IMR-90 (cell line): ENCODE measurements at regions of chr1 and their contacts with region 1.

Region 1: GRCh38 chr1:29889776-29890175 is 653.5 kb downstream of the PTPRU start:
- DNase-seq: no peak
- ATAC-seq: no peak
- H3K4me3 ChIP-seq: no peak overlapping the region
- H3K27ac ChIP-seq: no peak overlapping the region
- H3K4me1 ChIP-seq: no peaks in the 10 kb centered on the region
- H3K27me3 ChIP-seq: no peaks in the 10 kb centered on the region
- CTCF ChIP-seq: no peak
- POLR2A ChIP-seq: no peak
- RAD21 ChIP-seq: no peak

Region 2: DNA sequence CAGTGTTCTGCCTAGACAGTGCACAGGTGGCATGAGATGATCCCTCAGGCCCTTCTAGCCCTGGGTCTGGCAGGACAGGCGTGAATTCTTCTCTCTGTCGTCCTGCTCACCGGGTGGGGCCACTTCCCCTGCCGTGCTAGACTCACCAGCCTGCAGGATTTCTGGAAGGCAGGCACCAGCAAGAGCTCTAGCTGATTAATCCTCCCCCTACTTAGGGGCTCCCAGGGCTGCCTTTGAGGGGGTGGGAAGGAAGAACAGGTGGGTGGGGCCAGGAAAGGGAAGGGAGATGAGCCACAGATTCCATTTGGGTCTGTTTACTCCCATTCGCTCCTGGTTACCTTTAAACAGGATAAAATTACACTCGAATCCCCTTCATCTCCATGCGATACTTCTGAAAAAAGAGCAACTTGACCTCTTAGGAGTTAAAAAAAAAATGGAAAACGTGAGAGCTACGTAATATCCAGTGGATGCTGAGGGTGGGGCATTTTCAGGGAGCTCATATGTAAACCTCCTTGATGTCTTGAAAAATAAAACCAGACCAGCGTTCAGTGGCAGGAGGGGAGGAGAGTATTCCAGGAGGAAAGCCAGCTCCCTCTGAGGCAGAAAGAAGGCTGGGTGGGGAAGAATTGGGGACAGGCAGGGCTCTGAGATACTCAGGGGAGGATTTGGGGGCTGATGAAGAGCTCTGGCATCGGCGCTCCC is 12.0 kb after region 1 on chr1:
- CTCF ChIA-PET with region 1: interaction called, 10 read pairs
- POLR2A ChIA-PET with region 1: no interaction called
- dilution Hi-C with region 1: no loop called
- in situ Hi-C with region 1: no loop called
- intact Hi-C with region 1: no loop called
- DNase-seq: no peak
- ATAC-seq: no peak
- H3K4me3 ChIP-seq: no peak overlapping the region
- H3K27ac ChIP-seq: no peak overlapping the region
- H3K4me1 ChIP-seq: no peaks in the 10 kb centered on the region
- H3K27me3 ChIP-seq: no peaks in the 10 kb centered on the region
- CTCF ChIP-seq: no peak
- POLR2A ChIP-seq: no peak
- RAD21 ChIP-seq: no peak